Right ventricle myocardium superior (tissue), 1 donor: ENCODE measurements at regions of chr5 and their contacts with region 1.

Region 1: GRCh38 chr5:32100230-32100629 is 73.9 kb downstream of the GOLPH3 start:
- DNase-seq: no peak
- ATAC-seq: peak; percentile 8

Region 2: GRCh38 chr5:31720007-31720406 is 380.2 kb before region 1 on chr5:
- intact Hi-C with region 1: no loop called
- DNase-seq: no peak
- ATAC-seq: peak; percentile 40

Region 3: GRCh38 chr5:32174011-32174870 is 74.0 kb after region 1 on chr5 and contains the start of gene GOLPH3:
- intact Hi-C with region 1: loop called (anchors 5 kb)
- DNase-seq: peak; percentile 97
- ATAC-seq: peak; percentile 97
- total RNA-seq, gene GOLPH3: 35.9 TPM

Region 4: DNA sequence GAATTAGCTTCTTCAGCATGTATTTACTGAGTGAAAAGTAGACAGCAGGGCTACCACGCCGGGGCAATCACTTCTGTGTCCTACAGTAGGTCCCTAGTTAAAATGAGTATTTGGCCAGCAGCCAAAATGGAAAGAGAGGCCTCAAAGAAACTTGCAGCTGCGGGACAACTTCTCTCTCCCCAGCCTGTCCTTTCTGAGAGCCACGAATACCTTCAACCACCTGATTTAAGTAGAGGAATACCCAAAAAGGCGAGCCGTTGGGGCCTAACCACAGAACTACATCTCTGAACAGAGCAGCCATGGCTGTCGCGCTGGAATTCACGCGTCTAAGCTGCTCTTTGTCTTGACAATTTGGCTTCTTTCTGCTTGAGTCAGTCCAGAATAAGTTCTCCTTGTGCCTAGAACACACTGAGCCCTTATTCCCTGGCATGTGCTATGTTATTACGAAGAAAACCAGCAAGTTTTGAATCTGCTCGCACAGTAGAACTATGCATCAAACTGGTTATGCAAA is 117.7 kb after region 1 on chr5:
- intact Hi-C with region 1: no loop called
- DNase-seq: no peak
- ATAC-seq: peak; percentile 79